ENCODE measurements at regions of chr9 and their contacts with region 1.

Region 1: GRCh38 chr9:91150998-91151717 is 210.6 kb downstream of the AUH start:
- DNase-seq: peak; percentile 72
- ATAC-seq: peak; percentile 68
- H3K4me3 Mint-ChIP-seq: peak overlapping the region; percentile 0
- H3K27ac Mint-ChIP-seq: peak overlapping the region; percentile 94
- H3K4me1 Mint-ChIP-seq: peaks cover 85% of the 10 kb centered on the region
- H3K27me3 Mint-ChIP-seq: no peaks in the 10 kb centered on the region
- CTCF ChIP-seq: no peak

Region 2: DNA sequence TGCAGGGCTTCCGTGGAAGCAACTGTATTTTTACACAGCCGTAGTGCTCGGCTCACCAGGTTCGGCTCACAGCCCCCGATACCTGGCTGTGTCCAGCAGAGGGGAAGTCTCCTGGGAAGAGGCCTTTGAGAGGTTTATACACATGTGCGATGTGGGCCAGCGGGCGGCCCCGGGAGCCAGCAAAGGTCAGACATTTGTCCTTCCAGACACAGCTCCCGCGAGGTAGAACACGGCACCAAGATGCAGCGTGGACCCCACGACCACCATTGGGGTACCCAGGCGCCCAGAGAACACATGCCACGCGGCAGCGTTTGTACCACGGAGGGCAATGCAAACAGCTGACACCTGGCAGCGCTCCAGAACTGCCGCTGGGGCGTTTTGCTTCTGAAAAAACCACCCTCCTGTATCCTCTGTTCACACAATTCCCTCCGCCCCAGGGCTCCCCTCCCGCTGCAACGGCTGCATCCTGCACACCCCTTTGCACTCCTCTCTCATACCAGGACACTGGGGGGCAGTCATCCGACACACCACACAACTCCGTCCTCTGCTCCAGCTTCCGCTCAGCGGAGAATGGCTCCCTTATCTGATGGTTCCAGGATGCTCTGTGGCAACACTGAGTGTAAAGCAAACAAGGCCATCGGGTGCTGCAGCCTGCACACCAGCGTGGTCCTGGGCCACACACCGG is 114.2 kb before region 1 on chr9:
- CTCF ChIA-PET with region 1: interaction called, 11 read pairs
- POLR2A ChIA-PET with region 1: interaction called, 8 read pairs
- intact Hi-C with region 1: no loop called
- DNase-seq: peak; percentile 85
- ATAC-seq: peak; percentile 89
- H3K4me3 Mint-ChIP-seq: peak overlapping the region; percentile 37
- H3K27ac Mint-ChIP-seq: peak overlapping the region; percentile 69
- H3K4me1 Mint-ChIP-seq: peaks cover 52% of the 10 kb centered on the region
- H3K27me3 Mint-ChIP-seq: peaks cover under 1% of the 10 kb centered on the region
- CTCF ChIP-seq: peak; percentile 74

Region 3: GRCh38 chr9:91101611-91102168 is 49.5 kb before region 1 on chr9:
- CTCF ChIA-PET with region 1: interaction called, 22 read pairs
- POLR2A ChIA-PET with region 1: interaction called, 64 read pairs
- intact Hi-C with region 1: loop called (anchors 5 kb)
- DNase-seq: peak; percentile 97
- ATAC-seq: peak; percentile 82
- H3K4me3 Mint-ChIP-seq: peak overlapping the region; percentile 79
- H3K27ac Mint-ChIP-seq: peak overlapping the region; percentile 95
- H3K4me1 Mint-ChIP-seq: peaks cover 58% of the 10 kb centered on the region
- H3K27me3 Mint-ChIP-seq: peaks cover 3% of the 10 kb centered on the region
- CTCF ChIP-seq: no peak

Region 4: GRCh38 chr9:91164724-91165520 is 13.8 kb after region 1 on chr9:
- CTCF ChIA-PET with region 1: interaction called, 14 read pairs
- POLR2A ChIA-PET with region 1: interaction called, 87 read pairs
- intact Hi-C with region 1: loop called (anchors 2 kb)
- DNase-seq: peak; percentile 94
- ATAC-seq: peak; percentile 79
- H3K4me3 Mint-ChIP-seq: peak overlapping the region; percentile 71
- H3K27ac Mint-ChIP-seq: peak overlapping the region; percentile 96
- H3K4me1 Mint-ChIP-seq: peaks cover 61% of the 10 kb centered on the region
- H3K27me3 Mint-ChIP-seq: no peaks in the 10 kb centered on the region
- CTCF ChIP-seq: no peak

Region 5: GRCh38 chr9:91361291-91362050 is 210.3 kb after region 1 on chr9 and contains the start of gene AUH:
- CTCF ChIA-PET with region 1: no interaction called
- POLR2A ChIA-PET with region 1: interaction called, 12 read pairs
- intact Hi-C with region 1: no loop called
- DNase-seq: peak; percentile 87
- ATAC-seq: peak; percentile 92
- H3K4me3 Mint-ChIP-seq: peak within 1 kb of the TSS; percentile 89
- H3K27ac Mint-ChIP-seq: peak within 1 kb of the TSS; percentile 87
- H3K4me1 Mint-ChIP-seq: peaks cover 45% of the 10 kb centered on the region
- H3K27me3 Mint-ChIP-seq: no peaks in the 10 kb centered on the region
- CTCF ChIP-seq: no peak
- total RNA-seq, gene AUH: 30.8 to 31.1 TPM

Measured in activated CD8-positive, alpha-beta T cell treated with anti-CD3 and anti-CD28 coated beads for 36 hours (primary cell).